Kidney (tissue), 22 donors: ENCODE measurements at regions of chr16 and their contacts with region 1.

Region 1: DNA sequence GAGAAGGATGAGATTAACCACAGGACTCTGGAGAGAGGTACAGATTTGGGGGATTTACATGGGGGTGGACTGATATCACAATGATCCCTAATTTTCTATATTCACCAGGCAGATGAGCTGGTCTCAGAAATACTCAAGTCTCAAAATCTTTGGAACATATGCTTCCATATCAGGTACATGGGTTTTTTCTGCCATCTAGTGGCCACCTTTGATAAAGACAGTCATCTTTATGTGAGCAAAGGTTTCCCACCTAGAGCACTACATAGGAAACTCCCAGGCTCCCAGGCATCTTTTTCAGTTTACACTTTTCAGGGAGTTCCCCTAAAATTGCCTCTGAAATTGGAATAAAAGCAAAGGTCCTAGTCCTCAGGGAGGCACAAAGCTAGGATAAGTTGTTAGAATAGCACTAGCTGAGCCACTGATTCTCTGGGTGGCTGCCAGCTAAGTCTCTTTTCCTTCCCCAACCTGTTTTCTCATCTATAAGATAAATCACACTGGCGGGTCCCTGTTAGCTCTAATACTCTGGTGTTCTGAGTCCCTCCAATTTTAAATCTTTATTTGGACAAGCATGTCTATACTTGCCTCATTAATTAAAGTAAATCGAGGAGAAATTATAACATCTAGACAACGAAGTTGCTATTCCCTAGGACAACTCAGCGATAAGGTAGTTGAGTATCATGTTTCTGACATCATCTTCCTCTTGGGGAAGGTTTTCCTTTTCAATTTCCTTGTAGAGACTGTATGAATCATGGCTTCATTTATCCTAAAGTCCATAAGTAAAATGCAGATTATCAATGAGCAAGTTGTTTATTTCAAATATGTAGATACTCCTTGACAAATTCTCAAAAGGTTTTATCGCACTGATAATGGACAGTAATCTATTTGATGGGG is 19.0 kb upstream of the MON1B start:
- DNase-seq: peak in 4 of 5 donors; percentile 31 to 82 (median 58)
- H3K4me3 ChIP-seq: no peak overlapping the region
- H3K27ac ChIP-seq: no peak overlapping the region
- H3K4me1 ChIP-seq: no peaks in the 10 kb centered on the region
- H3K27me3 ChIP-seq: no peaks in the 10 kb centered on the region
- CTCF ChIP-seq: peak; percentile 70

Region 2: DNA sequence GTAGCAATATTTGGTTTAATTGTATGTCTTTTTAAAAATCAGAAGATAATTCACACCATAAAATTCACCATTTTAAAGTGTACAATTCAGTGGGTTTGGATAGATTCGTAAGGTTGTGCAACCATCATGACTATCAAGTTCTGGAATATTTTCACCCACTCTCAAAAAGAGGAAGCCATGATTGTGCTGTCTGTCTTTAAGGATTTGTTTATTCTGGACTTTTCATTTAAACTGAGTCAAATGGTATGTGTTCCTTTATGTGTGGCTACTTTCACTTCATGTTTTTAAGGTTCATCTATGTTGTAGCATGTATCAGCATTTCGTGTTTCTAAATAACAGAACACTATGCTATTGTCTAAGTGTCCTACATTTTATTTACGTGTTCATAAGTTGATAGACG is 1377.6 kb before region 1 on chr16:
- intact Hi-C with region 1: loop called (anchors 10 kb)
- DNase-seq: no peak
- H3K4me3 ChIP-seq: no peak overlapping the region
- H3K27ac ChIP-seq: no peak overlapping the region
- H3K4me1 ChIP-seq: no peaks in the 10 kb centered on the region
- H3K27me3 ChIP-seq: no peaks in the 10 kb centered on the region
- CTCF ChIP-seq: no peak

Region 3: GRCh38 chr16:77062878-77063671 is 108.9 kb before region 1 on chr16:
- intact Hi-C with region 1: no loop called
- DNase-seq: peak in 3 of 5 donors; percentile 24 to 52 (median 25)
- H3K4me3 ChIP-seq: no peak overlapping the region
- H3K27ac ChIP-seq: no peak overlapping the region
- H3K4me1 ChIP-seq: peaks cover 0 to 2% (median 0%) of the 10 kb centered on the region in 3 donors
- H3K27me3 ChIP-seq: no peaks in the 10 kb centered on the region
- CTCF ChIP-seq: no peak